ENCODE measurements at regions of chr4 and their contacts with region 1.

Region 1: DNA sequence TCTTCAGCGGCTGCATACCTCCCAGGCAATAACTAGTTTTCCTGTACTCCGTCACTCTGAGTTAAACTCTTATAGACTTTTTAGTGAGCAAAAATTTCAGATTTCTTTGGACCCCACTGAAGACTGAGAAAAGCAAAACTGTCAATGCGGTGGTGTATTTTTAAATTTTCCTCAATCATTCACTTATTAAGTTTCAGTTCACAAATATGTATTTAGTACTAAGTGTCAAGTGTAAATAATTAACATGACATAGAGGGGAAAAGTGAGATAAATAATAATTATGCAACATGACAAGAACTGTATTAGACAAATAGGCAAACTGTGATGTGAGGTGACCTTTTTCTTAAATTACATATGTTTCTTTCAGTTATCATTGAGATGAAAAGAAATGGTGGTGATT is 124.4 kb downstream of the NAF1 start:
- DNase-seq: no peak
- ATAC-seq: no peak
- H3K4me3 ChIP-seq: no peak overlapping the region
- H3K27ac ChIP-seq: no peak overlapping the region
- H3K4me1 ChIP-seq: no peaks in the 10 kb centered on the region
- H3K27me3 ChIP-seq: no peaks in the 10 kb centered on the region

Region 2: DNA sequence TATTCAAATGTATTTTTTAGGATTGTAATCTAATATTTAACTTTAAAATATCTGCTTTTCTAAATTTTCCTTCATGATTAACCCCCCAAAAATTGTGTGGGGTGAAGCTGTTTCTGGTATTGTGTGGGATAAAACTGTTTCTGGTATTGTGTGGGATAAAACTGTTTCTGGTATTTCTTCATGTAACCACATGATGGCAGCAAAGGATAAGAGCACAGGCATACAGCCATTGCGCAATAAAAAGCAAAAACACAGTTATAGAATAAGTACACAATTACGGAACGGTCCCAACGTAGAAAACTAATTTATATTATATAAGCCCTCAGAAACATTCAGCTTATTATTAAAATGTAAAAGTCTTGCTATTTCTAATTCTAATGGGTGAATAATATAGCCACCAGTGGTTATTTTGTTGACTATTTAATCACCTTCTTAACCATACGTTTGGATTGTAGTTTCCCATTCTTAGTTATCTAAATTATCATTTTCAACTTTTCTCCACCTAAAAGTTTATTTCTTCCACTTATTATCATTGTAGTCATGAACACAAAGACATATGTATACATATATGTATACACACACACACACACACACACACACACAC is 544.6 kb before region 1 on chr4:
- intact Hi-C with region 1: loop called (anchors 5 to 10 kb)
- DNase-seq: no peak
- ATAC-seq: peak; percentile 88
- H3K4me3 ChIP-seq: no peak overlapping the region
- H3K27ac ChIP-seq: no peak overlapping the region
- H3K4me1 ChIP-seq: no peaks in the 10 kb centered on the region
- H3K27me3 ChIP-seq: no peaks in the 10 kb centered on the region

Region 3: DNA sequence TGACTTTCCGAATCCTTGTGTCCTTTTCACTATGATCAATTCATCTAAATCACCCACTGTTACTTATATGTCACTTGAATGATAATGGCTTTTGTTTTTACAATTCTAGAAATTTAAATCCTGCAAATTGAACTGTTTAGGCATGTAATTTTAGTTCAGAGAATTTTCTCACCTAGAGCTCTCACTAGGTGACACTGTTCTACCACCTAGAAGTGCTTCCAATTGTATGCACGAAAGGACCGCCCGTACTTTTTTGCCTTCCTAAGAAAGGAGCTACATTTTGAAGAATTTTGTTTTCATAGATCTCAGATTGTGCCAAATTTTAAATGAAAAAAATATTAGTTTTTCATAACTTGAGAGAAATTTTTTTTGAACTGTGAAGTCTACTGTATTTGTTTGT is 396.9 kb before region 1 on chr4:
- intact Hi-C with region 1: loop called (anchors 10 kb)
- DNase-seq: no peak
- ATAC-seq: no peak
- H3K4me3 ChIP-seq: no peak overlapping the region
- H3K27ac ChIP-seq: no peak overlapping the region
- H3K4me1 ChIP-seq: no peaks in the 10 kb centered on the region
- H3K27me3 ChIP-seq: no peaks in the 10 kb centered on the region

Region 4: GRCh38 chr4:162952232-162952631 is 90.1 kb before region 1 on chr4:
- intact Hi-C with region 1: no loop called
- DNase-seq: no peak
- ATAC-seq: no peak
- H3K4me3 ChIP-seq: no peak overlapping the region
- H3K27ac ChIP-seq: no peak overlapping the region
- H3K4me1 ChIP-seq: no peaks in the 10 kb centered on the region
- H3K27me3 ChIP-seq: no peaks in the 10 kb centered on the region

Measured in aorta (tissue), 5 donors.